ENCODE measurements at regions of chr6 and their contacts with region 1.

Region 1: DNA sequence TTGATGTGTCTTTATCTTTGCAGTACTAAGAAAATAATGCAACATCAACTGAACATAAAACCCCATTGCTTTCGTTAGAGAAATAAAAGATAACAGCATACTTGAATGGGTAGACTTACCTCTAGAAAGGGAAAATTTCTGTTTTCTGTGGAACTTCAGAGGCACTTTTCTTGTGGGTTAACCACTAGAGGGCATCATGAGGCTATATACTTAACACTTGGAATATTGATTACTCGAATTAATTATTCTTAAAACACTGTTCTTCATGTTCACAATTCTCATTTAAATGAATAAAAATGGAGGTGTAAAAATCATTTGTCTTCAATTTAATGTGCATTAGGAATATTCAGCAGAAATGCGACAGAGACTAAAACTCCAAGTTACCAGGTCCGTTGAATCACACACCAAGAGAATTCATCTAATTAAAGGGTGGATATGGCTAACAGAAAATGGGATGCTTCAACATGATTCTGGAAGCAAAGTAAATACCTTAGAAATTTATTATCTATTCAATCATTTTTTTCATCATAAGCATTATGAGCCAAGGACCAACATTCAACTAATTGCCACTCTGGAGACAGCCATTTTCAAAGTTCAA is 330.8 kb upstream of the PREP start:
- DNase-seq: no peak
- H3K4me3 ChIP-seq: no peak overlapping the region
- H3K27ac ChIP-seq: no peak overlapping the region
- H3K4me1 ChIP-seq: peaks cover 0 to 5% (median 0%) of the 10 kb centered on the region in 4 donors
- H3K27me3 ChIP-seq: no peaks in the 10 kb centered on the region
- CTCF ChIP-seq: peak; percentile 48 to 67 (median 56)
- EP300 ChIP-seq: no peak
- POLR2A ChIP-seq: no peak

Region 2: GRCh38 chr6:104483225-104483834 is 1250.3 kb before region 1 on chr6:
- in situ Hi-C with region 1: no loop called
- intact Hi-C with region 1: no loop called
- DNase-seq: no peak
- H3K4me3 ChIP-seq: no peak overlapping the region
- H3K27ac ChIP-seq: no peak overlapping the region
- H3K4me1 ChIP-seq: no peaks in the 10 kb centered on the region
- H3K27me3 ChIP-seq: peaks cover 18% of the 10 kb centered on the region
- CTCF ChIP-seq: peak in 4 of 5 experiments; percentile 17 to 35 (median 22)
- EP300 ChIP-seq: no peak
- POLR2A ChIP-seq: no peak

Region 3: DNA sequence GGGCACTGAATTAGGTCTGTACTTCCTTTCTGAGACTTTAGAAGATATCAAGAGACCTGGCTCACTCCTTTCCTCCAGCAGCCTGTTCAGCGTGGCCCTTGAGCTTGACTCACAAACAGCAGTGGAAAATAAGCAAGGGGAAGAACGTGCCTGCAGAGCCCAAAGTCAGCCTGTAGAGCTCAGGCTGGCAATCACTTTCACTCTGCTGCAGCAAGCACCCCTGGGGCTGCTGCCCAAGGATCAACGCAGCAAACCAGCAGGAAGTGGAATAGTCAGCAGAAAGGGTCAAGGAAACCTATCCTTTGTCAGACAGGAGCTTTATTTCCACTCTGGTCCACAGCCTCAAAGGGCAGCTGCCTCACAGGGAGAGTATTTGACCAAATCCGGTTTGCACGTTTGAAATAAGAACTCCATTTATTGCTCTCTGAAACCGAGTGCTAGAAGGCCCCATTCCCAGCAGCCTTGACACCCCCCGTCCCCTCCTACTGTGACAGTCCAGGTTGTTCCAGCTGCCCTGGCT is 429.8 kb after region 1 on chr6:
- in situ Hi-C with region 1: no loop called
- intact Hi-C with region 1: no loop called
- DNase-seq: peak; percentile 52
- H3K4me3 ChIP-seq: no peak overlapping the region
- H3K27ac ChIP-seq: peak overlapping the region; percentile 67 to 83 (median 72)
- H3K4me1 ChIP-seq: peaks cover 0 to 6% (median 0%) of the 10 kb centered on the region in 4 donors
- H3K27me3 ChIP-seq: no peaks in the 10 kb centered on the region
- CTCF ChIP-seq: no peak
- EP300 ChIP-seq: no peak
- POLR2A ChIP-seq: no peak

Region 4: GRCh38 chr6:106223300-106223930 is 489.8 kb after region 1 on chr6:
- in situ Hi-C with region 1: loop called in 2 of 4 experiments (anchors 10 to 25 kb)
- intact Hi-C with region 1: no loop called
- DNase-seq: peak; percentile 77
- H3K4me3 ChIP-seq: no peak overlapping the region
- H3K27ac ChIP-seq: no peak overlapping the region
- H3K4me1 ChIP-seq: peaks cover 0 to 25% (median 14%) of the 10 kb centered on the region in 4 donors
- H3K27me3 ChIP-seq: no peaks in the 10 kb centered on the region
- CTCF ChIP-seq: peak; percentile 42 to 73 (median 63)
- EP300 ChIP-seq: no peak
- POLR2A ChIP-seq: no peak

Region 5: GRCh38 chr6:106275692-106276091 is 542.0 kb after region 1 on chr6:
- in situ Hi-C with region 1: loop called in 1 of 4 experiments (anchors 25 kb)
- intact Hi-C with region 1: no loop called
- DNase-seq: no peak
- H3K4me3 ChIP-seq: no peak overlapping the region
- H3K27ac ChIP-seq: peak overlapping the region in 1 of 4 donors; percentile 6
- H3K4me1 ChIP-seq: peaks cover 0 to 8% (median 3%) of the 10 kb centered on the region in 4 donors
- H3K27me3 ChIP-seq: no peaks in the 10 kb centered on the region
- CTCF ChIP-seq: no peak
- EP300 ChIP-seq: no peak
- POLR2A ChIP-seq: no peak

Region 6: DNA sequence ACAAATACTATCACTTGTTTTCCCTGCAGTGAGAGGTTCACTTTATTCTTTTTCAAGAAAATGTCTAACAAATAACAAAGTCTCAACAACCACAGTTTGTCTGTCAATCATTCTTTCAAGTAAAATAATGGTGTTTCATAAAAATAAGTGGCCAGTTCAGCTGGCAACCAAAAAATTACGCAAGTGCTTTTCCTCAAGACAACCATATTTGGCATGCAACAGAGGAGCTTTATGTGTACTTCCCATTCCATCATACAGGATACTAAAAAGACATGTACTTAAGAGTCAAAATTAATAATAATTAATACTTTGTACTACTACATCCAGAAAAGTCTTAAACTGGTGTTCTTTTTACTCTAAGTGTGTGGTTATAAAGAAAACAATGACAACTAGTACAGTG is 557.3 kb after region 1 on chr6:
- in situ Hi-C with region 1: loop called in 2 of 4 experiments (anchors 10 to 25 kb)
- intact Hi-C with region 1: no loop called
- DNase-seq: no peak
- H3K4me3 ChIP-seq: no peak overlapping the region
- H3K27ac ChIP-seq: no peak overlapping the region
- H3K4me1 ChIP-seq: no peaks in the 10 kb centered on the region
- H3K27me3 ChIP-seq: no peaks in the 10 kb centered on the region
- CTCF ChIP-seq: no peak
- EP300 ChIP-seq: no peak
- POLR2A ChIP-seq: no peak

Region 7: GRCh38 chr6:106300944-106301343 is 567.3 kb after region 1 on chr6:
- in situ Hi-C with region 1: loop called in 3 of 4 experiments (anchors 10 to 25 kb)
- intact Hi-C with region 1: no loop called
- DNase-seq: no peak
- H3K4me3 ChIP-seq: no peak overlapping the region
- H3K27ac ChIP-seq: no peak overlapping the region
- H3K4me1 ChIP-seq: peaks cover 0 to 18% (median 4%) of the 10 kb centered on the region in 4 donors
- H3K27me3 ChIP-seq: no peaks in the 10 kb centered on the region
- CTCF ChIP-seq: peak; percentile 42 to 52 (median 48)
- EP300 ChIP-seq: no peak
- POLR2A ChIP-seq: no peak

Measured in transverse colon (tissue), 4 donors.